ENCODE measurements at regions of chr15 and their contacts with region 1.

Region 1: DNA sequence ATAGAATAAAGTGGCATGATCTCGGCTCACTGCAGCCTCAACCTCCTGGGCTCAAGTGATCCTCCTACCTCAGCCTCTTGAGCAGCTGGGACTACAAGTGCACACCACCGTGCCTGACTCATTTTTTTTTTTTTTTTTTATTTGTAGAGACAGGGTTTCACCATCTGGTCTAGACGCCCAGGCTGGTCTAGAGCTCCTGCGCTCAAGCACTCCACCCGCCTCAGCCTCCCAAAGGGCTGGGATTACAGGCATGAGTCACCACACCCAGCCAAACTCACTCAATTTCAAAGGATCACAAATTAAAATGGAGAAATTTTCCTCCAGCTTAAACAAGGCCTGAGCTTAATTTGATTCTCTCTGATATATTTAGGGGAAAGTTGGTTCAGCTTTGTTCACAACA is 27.3 kb upstream of the NMB start:
- DNase-seq: no peak
- ATAC-seq: no peak
- H3K4me3 ChIP-seq: no peak overlapping the region
- H3K4me3 Mint-ChIP-seq: no peak overlapping the region
- H3K27ac ChIP-seq: no peak overlapping the region
- H3K27ac Mint-ChIP-seq: no peak overlapping the region
- H3K4me1 ChIP-seq: no peaks in the 10 kb centered on the region
- H3K4me1 Mint-ChIP-seq: peaks cover 5% of the 10 kb centered on the region
- H3K27me3 ChIP-seq: no peaks in the 10 kb centered on the region
- H3K27me3 Mint-ChIP-seq: no peaks in the 10 kb centered on the region
- CTCF ChIP-seq: no peak

Region 2: DNA sequence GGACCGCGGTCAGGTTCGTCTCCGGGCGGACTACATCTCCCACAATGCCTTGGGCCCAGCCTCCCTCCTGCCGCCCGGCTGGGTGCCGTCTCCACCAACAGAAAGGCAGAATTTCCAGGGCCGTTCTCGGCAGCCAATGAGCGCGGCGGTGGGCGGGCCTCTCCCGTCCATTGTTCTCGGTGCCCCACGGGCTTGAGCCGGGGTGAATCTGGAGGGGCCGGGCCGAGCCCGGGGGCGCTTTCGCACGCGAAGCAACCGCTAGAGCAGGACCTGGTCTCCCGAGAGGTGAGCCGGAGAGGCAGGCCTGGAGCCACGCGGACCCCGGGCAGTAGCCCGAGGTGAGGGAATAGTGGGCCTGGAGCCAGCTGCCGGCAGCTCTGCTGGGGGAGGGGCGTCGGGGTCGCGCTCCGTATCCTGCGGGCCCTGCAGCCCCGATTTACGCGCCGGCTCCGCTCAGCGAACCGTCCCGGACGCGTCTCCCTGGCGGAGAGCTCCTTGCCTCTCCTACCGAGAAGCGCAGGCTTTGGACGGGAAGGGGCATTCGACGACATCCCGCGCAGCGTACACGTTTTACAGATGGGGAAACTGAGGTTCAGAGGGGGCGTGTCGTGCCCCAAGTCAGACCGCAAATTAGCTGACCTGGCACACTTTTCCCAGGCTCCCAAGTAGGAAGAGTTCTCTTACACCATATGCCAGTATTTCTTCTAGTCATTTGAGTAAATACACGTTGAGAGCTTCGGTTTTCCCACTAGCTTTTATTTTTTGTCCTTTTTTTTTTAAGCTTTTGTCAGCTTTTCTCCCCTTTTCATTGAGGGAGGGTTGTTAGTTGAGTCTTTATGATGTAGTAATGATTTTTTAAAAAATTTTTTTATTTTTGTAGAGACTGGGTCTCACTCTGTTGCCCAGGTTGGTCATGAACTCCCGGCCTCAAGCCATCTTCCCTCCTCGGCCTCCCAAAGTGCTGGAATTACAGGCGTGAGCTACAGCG is 84.2 kb before region 1 on chr15 and contains the start of gene ZSCAN2:
- CTCF ChIA-PET with region 1: no interaction called
- POLR2A ChIA-PET with region 1: no interaction called
- intact Hi-C with region 1: no loop called
- DNase-seq: peak; percentile 81 to 95 (median 92)
- ATAC-seq: peak; percentile 95
- H3K4me3 ChIP-seq: peak within 1 kb of the TSS; percentile 93 to 100
- H3K4me3 Mint-ChIP-seq: peak within 1 kb of the TSS; percentile 99
- H3K27ac ChIP-seq: peak within 1 kb of the TSS; percentile 34 to 58
- H3K27ac Mint-ChIP-seq: peak within 1 kb of the TSS; percentile 93
- H3K4me1 ChIP-seq: peaks cover 42% of the 10 kb centered on the region
- H3K4me1 Mint-ChIP-seq: peaks cover 74% of the 10 kb centered on the region
- H3K27me3 ChIP-seq: no peaks in the 10 kb centered on the region
- H3K27me3 Mint-ChIP-seq: no peaks in the 10 kb centered on the region
- CTCF ChIP-seq: no peak
- total RNA-seq, gene ZSCAN2: 2.7 to 4.4 TPM

Region 3: DNA sequence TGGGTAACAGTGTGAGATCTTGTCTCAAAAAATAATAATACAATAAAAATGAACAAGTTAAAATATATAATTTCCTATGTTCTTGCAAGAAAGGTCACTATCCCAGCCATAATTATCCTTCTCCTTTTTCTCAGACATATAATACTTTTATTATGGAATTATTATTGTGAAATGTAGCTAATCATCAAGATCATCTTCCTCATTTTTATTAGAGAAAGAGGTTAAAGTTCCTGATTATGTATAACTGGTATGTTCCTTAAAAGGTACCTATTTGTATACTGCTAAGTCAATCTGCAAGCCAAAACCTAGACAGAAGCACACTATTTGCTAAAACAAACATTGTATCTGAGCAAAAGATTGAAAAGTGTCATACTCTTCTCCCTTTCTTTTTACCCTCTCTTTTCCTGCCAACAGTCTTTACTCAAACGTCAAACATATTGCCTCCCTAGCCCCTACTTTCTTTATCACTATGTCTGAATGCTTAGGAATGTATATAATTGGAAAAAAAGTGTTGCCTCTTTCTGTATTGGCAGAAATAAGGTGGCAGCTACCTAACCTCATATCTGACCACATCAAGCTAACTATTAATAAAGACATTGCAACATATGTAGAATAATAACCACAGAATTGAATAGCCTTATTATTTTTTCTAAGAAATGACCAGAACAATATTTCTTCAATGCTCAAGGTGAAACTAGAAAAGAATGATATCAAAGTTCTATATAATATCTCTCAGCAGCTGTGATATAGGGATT is 12.1 kb after region 1 on chr15:
- CTCF ChIA-PET with region 1: no interaction called
- POLR2A ChIA-PET with region 1: no interaction called
- intact Hi-C with region 1: loop called in 1 of 2 experiments (anchors 1 kb)
- DNase-seq: no peak
- ATAC-seq: no peak
- H3K4me3 ChIP-seq: no peak overlapping the region
- H3K4me3 Mint-ChIP-seq: no peak overlapping the region
- H3K27ac ChIP-seq: peak overlapping the region in 1 of 2 experiments; percentile 25
- H3K27ac Mint-ChIP-seq: peak overlapping the region; percentile 20
- H3K4me1 ChIP-seq: peaks cover 20% of the 10 kb centered on the region
- H3K4me1 Mint-ChIP-seq: peaks cover 58% of the 10 kb centered on the region
- H3K27me3 ChIP-seq: no peaks in the 10 kb centered on the region
- H3K27me3 Mint-ChIP-seq: no peaks in the 10 kb centered on the region
- CTCF ChIP-seq: no peak